GM18951 (cell line): ENCODE measurements at regions of chrX and their contacts with region 1.

Region 1: DNA sequence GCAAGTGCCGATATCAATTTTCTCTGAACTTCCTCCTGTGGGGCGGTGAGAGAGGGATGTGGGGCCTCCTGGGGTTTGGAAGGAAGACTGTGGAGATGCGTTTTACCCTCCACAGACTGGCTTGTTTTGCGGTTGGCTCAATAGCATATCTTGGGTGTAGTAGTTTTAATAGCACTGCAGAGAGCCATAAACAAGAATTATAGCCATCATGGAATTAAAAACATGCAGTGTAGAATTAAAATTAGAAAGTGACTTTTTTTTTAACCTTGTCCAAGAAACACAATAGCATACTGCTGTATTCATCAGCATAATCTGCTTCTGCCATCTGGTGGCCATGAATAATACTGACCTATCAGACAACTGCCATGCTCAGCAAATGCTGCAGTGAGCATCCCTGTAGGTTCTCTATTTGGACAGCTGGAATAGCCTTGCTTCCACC is 47.3 kb upstream of the SCML1 start:
- POLR2A ChIP-seq: no peak

Region 2: DNA sequence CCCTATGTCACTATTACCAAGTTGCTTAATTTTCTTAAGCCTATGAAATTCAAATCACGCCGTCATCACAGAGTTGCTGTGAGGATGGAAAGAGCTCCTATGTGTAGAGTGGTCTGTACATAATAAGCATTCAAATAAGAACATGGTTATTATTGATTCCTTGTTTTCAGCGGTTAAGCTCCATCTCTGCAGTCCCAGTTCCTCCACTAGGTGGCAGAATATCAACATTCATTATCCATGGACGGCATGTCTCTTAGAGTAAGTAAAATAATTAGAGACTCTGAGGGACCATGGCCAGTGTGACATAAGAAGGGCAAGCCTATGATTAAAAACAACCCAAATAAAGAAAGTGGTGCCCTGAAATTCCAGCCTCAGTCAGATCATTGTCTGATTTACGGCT is 447.5 kb before region 1 on chrX:
- in situ Hi-C with region 1: loop called (anchors 25 kb)
- POLR2A ChIP-seq: no peak

Region 3: GRCh38 chrX:17547658-17548057 is 142.3 kb before region 1 on chrX:
- in situ Hi-C with region 1: loop called (anchors 25 kb)
- POLR2A ChIP-seq: no peak

Region 4: DNA sequence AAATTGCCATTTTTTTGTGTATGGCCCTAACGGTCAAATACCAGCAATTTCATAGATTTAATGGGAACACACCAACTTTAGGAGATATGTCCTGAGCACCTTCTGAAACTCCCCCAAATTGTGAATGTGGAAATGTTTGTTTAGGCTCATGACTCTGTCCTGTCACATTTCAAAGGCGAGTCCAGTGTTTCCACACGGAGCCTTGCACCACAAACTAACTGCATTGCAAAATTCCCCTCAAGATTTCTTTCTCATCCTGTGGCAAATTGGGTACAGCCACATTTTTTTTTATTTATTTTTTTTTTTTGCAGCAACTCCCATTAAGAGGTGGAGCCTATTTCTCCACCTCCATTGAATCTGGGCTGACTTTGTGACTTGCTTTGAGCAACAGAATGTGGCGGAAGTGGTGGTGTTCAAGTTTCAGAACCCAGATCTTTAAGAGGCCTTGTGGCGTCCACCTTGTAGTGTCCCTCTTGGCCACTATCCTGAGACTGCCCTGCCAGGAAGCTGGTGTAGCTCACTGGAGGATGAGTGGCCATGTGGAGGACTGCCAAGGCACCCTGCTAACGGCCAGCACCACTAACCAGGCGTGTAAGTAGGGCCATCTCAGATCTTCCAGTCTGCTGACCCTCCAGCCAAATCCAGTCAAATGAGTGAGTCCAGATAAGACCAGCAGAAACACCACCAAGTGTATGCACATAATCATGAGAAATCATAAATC is 125.1 kb before region 1 on chrX:
- in situ Hi-C with region 1: no loop called
- POLR2A ChIP-seq: no peak